ENCODE measurements at regions of chr16 and their contacts with region 1.

Region 1: DNA sequence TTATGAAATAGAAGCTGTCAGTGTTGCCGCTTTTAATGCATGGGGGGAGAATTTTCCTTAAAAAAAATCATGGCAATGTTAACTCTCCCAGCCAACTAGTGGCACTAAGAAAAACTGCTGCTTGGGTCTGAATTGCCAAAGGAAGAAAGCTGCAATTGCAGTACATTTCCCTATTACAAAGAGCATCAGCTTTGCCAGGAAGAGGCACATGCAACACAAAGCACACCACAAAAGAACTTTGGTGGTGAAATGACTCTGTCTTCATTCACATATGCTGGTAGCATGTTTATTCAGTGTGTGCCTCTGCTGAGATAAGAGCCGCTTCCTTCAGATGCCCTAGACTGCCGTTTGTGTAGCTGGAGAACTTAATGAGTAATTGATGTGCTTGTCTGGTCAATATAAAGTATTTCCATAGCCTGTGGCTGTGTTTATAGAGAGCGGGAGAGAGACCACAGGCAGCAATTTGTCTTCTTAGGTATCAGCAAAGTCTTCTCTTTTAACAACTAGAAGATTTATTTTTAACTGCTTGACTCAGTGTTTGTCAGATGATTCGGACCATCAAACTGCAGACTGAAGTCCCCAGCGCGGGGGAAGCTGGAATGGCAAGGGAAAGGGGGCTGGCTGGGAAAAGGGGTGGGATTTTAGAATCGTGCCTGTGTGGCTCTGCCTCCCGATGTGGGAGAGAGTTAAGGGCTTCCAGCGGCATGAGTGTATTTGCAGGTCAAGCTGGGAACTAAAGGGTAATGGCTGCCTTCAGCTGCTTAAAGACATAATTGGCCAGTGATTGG is 115.1 kb downstream of the MRTFB start:
- DNase-seq: peak; percentile 30 to 72 (median 69)
- ATAC-seq: peak; percentile 77 to 82
- H3K4me3 ChIP-seq: peak overlapping the region; percentile 73
- H3K27ac ChIP-seq: peak overlapping the region; percentile 97
- H3K4me1 ChIP-seq: peaks cover 4% of the 10 kb centered on the region
- H3K27me3 ChIP-seq: no peaks in the 10 kb centered on the region

Region 2: GRCh38 chr16:14003074-14003570 is 183.1 kb before region 1 on chr16:
- intact Hi-C with region 1: loop called in 1 of 4 experiments (anchors 10 kb)
- DNase-seq: peak; percentile 70 to 81 (median 80)
- ATAC-seq: peak; percentile 75 to 76
- H3K4me3 ChIP-seq: peak overlapping the region; percentile 23
- H3K27ac ChIP-seq: peak overlapping the region; percentile 80
- H3K4me1 ChIP-seq: peaks cover 20% of the 10 kb centered on the region
- H3K27me3 ChIP-seq: no peaks in the 10 kb centered on the region

Region 3: GRCh38 chr16:14088155-14088753 is 97.9 kb before region 1 on chr16:
- intact Hi-C with region 1: loop called in 2 of 4 experiments (anchors 5 to 10 kb)
- DNase-seq: peak in 2 of 3 donors; percentile 20 to 72
- ATAC-seq: peak; percentile 59 to 77
- H3K4me3 ChIP-seq: no peak overlapping the region
- H3K27ac ChIP-seq: peak overlapping the region; percentile 38
- H3K4me1 ChIP-seq: peaks cover 12% of the 10 kb centered on the region
- H3K27me3 ChIP-seq: no peaks in the 10 kb centered on the region

Region 4: DNA sequence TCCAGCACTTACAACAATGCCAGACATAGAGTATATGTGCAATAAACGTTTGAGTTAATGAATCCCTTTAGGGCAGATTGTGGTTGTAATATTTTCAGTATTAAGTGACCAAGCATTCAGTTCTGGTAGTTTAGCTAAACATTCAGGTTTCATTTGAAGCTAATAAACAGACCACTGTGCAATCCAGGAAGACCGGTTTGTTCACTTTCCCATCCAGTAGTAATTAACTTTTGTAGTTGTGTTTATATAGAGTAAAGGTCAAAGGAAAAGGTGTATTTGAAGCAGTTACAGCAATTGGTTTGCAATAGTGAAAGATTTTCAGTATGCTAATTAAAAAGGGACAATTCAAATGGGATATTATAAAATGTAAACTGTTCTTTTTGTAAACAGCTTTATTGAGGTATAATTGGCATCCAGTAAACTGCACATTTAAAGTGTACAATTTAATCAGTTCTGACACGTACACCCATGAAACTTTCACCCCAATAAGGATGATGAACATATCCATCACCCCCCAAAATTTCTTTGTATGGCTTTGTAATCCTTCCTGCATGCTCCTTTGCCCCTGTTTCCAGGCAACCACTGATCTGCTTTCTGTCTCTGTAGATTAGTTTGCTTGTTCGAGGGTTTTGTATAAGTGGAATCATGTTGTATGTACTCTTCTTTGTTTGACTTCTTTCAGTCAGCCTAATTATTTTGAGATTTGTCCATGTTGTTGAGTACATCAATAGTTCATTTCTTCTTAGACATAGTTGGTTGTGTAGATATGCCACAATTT is 88.8 kb before region 1 on chr16:
- intact Hi-C with region 1: loop called in 1 of 4 experiments (anchors 10 kb)
- DNase-seq: no peak
- ATAC-seq: no peak
- H3K4me3 ChIP-seq: no peak overlapping the region
- H3K27ac ChIP-seq: no peak overlapping the region
- H3K4me1 ChIP-seq: no peaks in the 10 kb centered on the region
- H3K27me3 ChIP-seq: no peaks in the 10 kb centered on the region